ENCODE measurements at regions of chr2 and their contacts with region 1.

Region 1: GRCh38 chr2:178811901-178812300 is 4.7 kb upstream of the TTN start:
- DNase-seq: no peak
- ATAC-seq: no peak
- H3K4me3 ChIP-seq: no peak overlapping the region
- H3K27ac ChIP-seq: peak overlapping the region; percentile 96
- H3K4me1 ChIP-seq: peaks cover 16% of the 10 kb centered on the region
- H3K27me3 ChIP-seq: no peaks in the 10 kb centered on the region
- CTCF ChIP-seq: no peak

Region 2: DNA sequence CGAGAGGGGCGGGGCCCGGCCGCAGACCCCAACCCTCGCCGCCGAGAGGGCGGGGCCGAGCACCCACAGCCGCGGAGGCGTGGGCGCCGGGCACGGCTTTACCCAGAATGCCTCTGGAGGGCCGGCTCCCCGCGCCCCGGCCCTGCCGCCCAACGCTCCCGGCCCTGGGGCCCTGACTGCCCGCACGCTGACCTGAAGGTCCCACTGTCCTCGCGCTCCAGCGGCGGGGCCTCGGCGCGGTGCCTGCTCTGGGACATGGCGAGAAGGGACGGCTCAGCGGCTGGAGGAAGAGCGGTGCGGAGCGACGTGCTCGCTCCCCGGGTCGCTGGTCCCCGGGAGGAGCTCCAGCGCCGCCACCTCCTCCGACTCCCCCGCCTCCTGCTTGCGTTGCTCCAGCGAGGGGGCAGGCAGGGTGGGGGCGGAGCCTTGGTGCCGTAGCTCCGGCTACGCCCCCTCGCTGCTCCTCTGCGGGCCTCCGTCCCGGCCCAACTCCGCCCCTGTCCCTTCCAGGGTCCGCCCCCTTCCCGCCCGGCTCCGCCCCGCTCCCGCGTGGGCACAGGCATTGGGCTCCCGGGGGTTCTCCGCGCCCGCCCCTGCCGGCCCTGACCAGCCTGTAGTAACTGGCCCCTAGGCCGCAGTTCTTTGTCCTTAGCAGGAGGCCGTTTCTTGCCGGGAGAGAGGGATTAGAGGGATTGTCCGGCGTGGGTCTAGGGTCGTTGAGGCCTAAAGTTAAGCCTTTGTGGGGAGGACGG is 361.0 kb before region 1 on chr2 and contains the starts of genes PJVK and PRKRA:
- intact Hi-C with region 1: no loop called
- DNase-seq: peak; percentile 98 to 99
- ATAC-seq: peak; percentile 93 to 97 (median 94)
- H3K4me3 ChIP-seq: peak within 1 kb of the TSS; percentile 97
- H3K27ac ChIP-seq: peak within 1 kb of the TSS; percentile 100
- H3K4me1 ChIP-seq: peaks cover 35% of the 10 kb centered on the region
- H3K27me3 ChIP-seq: peaks cover 0 to 2% (median 0%) of the 10 kb centered on the region in 3 donors
- CTCF ChIP-seq: peak; percentile 20
- total RNA-seq, gene PJVK: 1.2 to 1.8 (median 1.4) TPM
- total RNA-seq, gene PRKRA: 53.1 to 96.2 (median 84.8) TPM

Region 3: DNA sequence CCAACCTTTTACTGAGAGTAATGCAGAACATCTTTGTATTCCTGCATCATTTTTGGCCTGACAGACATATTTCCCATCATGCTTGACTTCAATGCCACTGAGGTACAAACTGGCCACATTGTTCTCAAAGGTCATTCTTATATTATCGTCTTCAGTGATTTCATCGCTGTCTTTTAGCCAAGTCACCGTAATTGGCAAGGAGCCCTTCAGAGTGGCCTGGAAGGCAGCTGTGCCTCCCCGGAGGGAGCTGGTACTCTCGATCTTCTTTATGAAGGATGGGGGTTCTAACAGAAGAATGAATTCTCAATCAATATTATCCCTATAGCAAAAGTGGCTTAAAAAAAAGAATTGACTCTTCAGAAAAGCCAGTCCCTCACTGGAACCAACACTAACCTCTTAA is 80.6 kb before region 1 on chr2:
- intact Hi-C with region 1: no loop called
- DNase-seq: peak in 1 of 2 donors; percentile 59
- ATAC-seq: peak; percentile 29 to 58 (median 44)
- H3K4me3 ChIP-seq: no peak overlapping the region
- H3K27ac ChIP-seq: peak overlapping the region; percentile 69
- H3K4me1 ChIP-seq: peaks cover 88% of the 10 kb centered on the region
- H3K27me3 ChIP-seq: no peaks in the 10 kb centered on the region
- CTCF ChIP-seq: no peak

Region 4: GRCh38 chr2:178855151-178855550 is 43.2 kb after region 1 on chr2:
- intact Hi-C with region 1: loop called (anchors 1 to 5 kb)
- DNase-seq: no peak
- ATAC-seq: no peak
- H3K4me3 ChIP-seq: no peak overlapping the region
- H3K27ac ChIP-seq: peak overlapping the region; percentile 68
- H3K4me1 ChIP-seq: peaks cover 21% of the 10 kb centered on the region
- H3K27me3 ChIP-seq: no peaks in the 10 kb centered on the region
- CTCF ChIP-seq: no peak

Measured in psoas muscle (tissue), 8 donors.